ENCODE measurements at regions of chr2 and their contacts with region 1.

Region 1: DNA sequence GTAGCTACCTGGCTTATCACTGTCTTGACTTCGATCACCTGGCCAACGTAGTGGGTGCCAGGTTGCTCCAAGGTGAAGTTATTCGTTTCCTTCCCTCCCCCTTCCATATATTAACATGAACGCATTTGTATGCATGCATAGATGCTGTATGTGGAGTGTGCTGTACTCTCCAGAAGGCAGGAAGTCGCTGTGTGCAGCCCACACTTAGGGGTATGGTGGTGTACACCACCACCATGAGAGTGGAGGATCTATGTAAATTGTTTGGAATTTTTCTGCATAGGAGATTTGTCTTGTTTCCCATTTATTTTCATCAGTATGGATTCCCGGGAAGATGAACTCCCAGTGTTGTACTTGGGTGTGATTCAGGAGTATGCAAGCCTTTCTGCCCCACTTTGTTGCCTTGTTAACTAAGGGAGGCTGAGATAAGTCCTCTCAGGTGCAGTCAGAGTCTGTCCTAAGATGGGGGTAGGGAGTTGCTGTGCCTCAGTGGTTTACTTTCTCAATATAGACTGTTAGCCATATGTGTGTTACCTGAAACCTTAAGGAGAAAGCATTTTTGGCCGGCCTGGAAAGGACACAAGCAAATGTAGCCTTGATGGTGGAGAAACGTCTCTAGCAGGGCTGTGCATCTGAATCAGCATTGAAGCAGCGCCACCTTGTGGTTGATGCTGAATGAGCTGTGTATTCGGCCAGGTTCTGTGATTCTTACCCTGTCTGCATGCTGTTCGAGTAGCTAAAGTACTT is 149.8 kb downstream of the TANC1 start:
- DNase-seq: peak; percentile 91
- ATAC-seq: peak; percentile 89

Region 2: GRCh38 chr2:158900345-158900744 is 217.9 kb before region 1 on chr2:
- intact Hi-C with region 1: loop called (anchors 2 kb)
- DNase-seq: no peak
- ATAC-seq: peak; percentile 13

Region 3: DNA sequence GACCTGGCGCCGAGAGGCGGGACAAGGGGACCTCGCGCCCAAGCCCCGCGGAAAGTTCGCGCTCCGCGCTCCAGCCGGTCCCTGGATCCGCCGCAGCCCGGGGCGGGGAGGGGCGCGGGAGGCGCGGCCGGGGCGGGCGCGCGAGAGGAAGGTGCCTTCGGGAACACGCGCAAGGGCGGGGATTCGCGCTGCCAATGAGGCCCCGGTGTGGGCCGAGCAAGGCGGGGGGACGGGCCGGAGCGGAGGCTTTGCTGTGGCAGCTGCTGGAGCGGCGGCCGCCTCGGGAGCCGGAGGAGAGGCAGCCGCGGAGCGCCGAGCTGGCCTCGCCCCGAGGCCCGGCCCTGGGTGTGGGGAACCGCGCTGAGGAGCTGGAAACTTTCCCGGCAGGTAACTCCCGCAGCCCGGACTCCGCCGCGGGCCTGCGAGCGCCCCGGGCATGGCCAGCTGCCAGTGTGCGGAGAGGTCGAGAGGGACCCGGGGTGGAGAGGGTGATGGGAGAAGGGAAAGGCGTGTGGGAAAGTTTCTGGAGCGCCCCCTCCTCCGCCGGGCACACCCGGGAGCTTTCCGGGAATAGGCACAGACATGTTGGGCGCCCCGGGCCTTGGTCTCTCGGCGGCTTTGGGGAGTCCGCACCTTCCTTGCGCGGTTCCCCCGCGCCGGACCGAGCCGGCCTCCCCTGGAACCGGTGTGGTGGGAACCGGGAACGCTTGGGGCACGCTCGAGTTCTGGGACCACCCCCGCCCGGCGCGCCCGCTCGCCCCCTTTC is 149.7 kb before region 1 on chr2 and contains the start of gene TANC1:
- intact Hi-C with region 1: loop called (anchors 5 kb)
- DNase-seq: peak; percentile 96
- ATAC-seq: peak; percentile 95
- total RNA-seq, gene TANC1: 56.2 TPM

Region 4: DNA sequence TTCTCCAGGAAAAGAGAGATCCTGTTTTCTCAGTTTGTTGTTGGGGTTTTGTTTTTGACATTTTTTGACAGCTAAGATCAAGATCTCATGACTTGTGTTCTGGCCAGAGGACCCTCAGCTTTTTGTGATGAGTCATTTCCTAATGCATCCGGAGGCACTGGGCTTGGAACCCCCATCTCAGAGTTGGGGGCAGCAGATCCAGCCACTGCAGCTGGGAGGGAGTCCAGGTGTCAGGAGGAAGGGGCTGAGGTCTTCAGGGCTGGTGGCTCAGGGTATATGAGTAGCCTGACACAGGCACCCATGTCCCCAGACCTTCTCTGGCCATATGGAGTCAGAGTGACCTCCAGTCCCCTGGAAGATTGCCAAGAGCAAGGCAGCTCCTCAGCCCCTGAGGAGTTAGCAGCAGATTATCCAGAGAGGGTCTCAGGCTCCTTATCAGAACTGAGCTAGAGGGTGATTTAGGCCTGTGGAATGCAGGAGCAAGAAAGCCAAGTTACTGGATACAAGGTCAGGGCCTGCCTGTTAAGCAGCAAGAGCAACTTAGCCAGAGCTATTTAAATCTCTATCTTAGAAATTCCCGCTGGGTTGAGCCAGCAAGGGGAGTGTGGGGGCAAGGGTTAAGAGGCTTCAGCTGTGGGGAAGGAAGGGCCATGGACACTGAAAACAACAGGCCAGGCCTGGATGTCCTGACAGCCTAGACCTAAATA is 87.5 kb before region 1 on chr2:
- intact Hi-C with region 1: loop called (anchors 5 kb)
- DNase-seq: peak; percentile 65
- ATAC-seq: peak; percentile 79

Measured in Right ventricle myocardium superior (tissue), 1 donor.